Heart left ventricle (tissue), 16 donors: ENCODE measurements at regions of chr15 and their contacts with region 1.

Region 1: DNA sequence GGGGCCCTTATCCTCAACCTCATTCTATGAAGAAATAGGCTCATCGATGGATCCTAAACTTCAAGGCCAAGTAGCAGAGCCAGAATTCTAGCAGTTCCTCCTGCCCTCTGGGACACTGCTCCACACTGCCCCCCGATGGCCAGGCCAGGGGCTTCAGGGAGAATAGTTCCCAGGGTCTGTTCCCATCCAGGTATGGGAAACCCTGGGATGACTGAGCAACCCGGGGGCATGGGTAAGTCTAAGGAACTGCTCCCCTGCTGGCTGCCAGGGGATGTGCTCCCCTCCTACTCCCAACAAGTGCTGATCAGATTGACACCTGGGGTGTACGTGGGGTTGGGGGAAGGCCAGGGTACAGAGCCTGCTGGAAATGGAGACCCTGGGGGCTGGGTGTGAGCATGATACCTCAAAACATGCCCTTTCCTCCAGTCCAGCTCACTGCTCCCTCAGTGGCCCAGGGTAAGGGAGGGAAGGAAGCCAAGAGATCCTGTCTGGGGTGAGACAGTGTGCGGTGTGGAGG is 7.6 kb downstream of the ULK3 start:
- DNase-seq: peak in 4 of 5 donors; percentile 44 to 83 (median 64)
- ATAC-seq: peak; percentile 17 to 55 (median 34)
- H3K4me3 ChIP-seq: no peak overlapping the region
- H3K27ac ChIP-seq: no peak overlapping the region
- H3K4me1 ChIP-seq: peaks cover 0 to 14% (median 6%) of the 10 kb centered on the region in 12 donors
- H3K27me3 ChIP-seq: no peaks in the 10 kb centered on the region
- CTCF ChIP-seq: peak; percentile 64 to 89 (median 72)
- POLR2A ChIP-seq: no peak

Region 2: DNA sequence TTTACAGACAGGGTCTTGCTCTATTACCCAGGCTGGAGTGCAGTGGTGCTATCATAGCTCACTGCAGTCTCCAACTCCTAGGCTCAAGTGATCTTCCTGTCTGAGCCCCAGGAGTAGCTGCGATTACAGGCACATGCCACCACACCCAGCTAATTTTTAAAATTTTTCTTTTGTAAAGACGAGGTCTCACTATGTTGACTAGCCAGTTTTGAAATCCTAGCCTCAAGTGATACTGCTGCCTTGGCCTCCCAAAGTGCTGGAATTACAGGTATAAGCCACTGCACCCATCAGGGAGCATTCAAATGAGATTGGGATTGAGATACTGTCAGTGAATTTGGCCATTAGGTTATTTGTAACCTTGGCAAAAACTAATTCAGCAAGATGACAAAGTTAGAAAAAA is 161.2 kb before region 1 on chr15:
- intact Hi-C with region 1: no loop called
- DNase-seq: no peak
- ATAC-seq: no peak
- H3K4me3 ChIP-seq: no peak overlapping the region
- H3K27ac ChIP-seq: no peak overlapping the region
- H3K4me1 ChIP-seq: no peaks in the 10 kb centered on the region
- H3K27me3 ChIP-seq: no peaks in the 10 kb centered on the region
- CTCF ChIP-seq: no peak
- POLR2A ChIP-seq: no peak

Region 3: DNA sequence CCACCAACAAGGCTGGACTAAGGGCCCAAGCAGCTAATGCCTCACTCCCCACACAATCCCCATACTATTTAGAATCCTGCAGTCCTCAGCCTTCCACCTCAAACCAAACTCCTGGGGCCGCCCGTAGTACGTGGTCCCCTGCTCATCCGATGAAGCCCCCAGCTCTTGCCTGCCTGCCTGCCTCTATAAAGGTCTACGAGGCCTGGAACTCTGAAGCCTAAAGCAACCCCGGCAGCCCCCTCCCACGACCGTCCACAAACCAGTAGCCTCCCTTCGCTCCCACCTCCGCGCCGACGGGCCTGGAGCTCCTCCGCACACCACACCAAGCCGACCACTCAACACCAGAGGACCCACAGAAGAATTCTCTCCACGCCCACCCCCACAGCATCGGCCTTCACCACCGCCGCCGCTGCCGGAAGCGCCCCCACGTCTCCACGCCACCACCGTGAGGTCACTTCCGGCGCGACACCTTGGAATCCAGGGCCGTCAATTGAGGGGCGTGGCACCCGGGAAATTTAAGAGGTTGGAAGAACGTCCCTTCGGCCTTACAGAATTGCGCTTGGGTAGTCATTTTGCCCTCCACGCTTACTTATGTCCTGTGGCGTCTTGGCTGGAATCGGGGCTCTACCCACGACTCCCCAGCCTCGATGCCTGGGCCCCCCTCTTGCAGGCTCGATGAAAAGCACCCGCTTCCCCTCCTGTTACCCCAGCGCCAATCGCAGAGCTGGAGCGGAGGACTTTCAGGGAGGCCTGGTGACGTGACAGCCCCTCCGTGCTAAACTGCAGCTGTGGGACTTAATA is 139.6 kb before region 1 on chr15 and contains the start of gene EDC3:
- intact Hi-C with region 1: no loop called
- DNase-seq: peak; percentile 90 to 94 (median 91)
- ATAC-seq: peak; percentile 94 to 99 (median 98)
- H3K4me3 ChIP-seq: peak within 1 kb of the TSS; percentile 61 to 92 (median 81)
- H3K27ac ChIP-seq: peak within 1 kb of the TSS in 11 of 12 donors; percentile 62 to 89 (median 76)
- H3K4me1 ChIP-seq: peaks cover 0 to 29% (median 14%) of the 10 kb centered on the region in 12 donors
- H3K27me3 ChIP-seq: no peaks in the 10 kb centered on the region
- CTCF ChIP-seq: no peak
- POLR2A ChIP-seq: peak in 1 of 2 donors; percentile 45
- total RNA-seq, gene EDC3: 7.3 to 23.0 (median 16.5) TPM

Region 4: DNA sequence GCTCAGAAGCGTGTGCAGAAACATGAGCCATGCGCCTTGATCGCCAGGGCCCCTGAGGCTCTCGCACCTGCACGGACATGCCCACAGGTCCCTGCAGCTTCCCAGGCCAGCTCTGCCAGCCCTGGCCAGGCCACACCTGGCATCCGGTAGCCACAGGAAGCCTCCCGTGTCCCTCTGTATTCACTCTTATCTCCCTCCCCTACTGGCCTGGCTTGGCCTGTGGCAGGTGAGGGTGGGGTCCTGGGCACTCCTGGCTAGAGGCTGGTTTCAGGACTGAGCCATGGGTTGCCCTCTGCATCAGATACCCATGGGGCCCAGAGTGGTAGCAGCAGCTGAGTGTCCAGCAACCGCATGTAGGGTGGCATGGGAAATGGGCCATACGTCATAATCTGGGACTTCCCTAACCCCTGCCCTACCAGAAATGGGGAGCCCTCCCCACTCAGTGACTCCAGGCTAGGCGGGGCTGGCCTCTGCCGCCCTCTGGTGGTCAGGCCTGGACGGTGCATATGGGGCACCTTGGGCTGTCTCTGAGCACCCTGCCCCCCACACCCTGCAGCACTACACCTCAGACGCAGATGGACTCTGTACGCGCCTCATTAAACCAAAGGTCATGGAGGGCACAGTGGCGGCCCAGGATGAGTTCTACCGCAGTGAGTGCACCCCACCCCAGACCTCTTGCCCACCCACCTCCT is 35.4 kb before region 1 on chr15:
- intact Hi-C with region 1: loop called in 1 of 10 experiments (anchors 5 kb)
- DNase-seq: peak; percentile 73 to 90 (median 79)
- ATAC-seq: peak; percentile 79 to 91 (median 85)
- H3K4me3 ChIP-seq: peak overlapping the region in 1 of 12 donors; percentile 2
- H3K27ac ChIP-seq: peak overlapping the region in 5 of 12 donors; percentile 35 to 71 (median 60)
- H3K4me1 ChIP-seq: peaks cover 0 to 50% (median 19%) of the 10 kb centered on the region in 12 donors
- H3K27me3 ChIP-seq: no peaks in the 10 kb centered on the region
- CTCF ChIP-seq: peak; percentile 94 to 98 (median 97)
- POLR2A ChIP-seq: no peak